Left ventricle myocardium superior (tissue), 1 donor: ENCODE measurements at regions of chr3 and their contacts with region 1.

Region 1: GRCh38 chr3:148718982-148719862 is 21.5 kb downstream of the AGTR1 start:
- DNase-seq: no peak
- ATAC-seq: no peak

Region 2: DNA sequence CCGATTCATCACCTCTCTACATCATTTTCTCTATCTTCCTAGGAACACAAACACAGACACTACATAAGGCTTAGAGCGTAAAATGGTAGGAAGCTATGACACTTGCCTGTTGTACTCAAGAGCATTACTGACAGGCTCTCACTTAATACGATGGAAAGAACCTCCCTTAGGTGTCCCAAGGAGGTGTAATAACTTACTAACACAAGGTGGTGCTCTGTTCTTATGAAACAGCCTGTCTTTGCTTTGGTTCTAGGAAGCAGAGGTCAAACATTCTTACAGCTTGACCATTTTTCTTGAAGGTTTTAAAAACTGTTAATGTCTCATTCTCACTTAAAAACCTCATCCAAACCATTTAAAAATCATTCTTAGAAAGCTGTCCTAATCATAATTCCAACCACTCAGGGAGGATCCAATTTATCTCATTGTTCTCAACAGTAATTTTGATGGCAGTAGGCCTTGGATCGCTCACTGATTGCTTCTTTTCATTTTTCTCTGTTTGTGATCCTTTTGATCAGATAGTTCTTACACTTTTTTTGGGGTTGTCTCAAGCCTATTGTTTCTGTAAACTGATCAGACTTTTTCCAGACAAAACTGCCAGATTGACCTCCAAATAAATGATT is 339.3 kb before region 1 on chr3:
- intact Hi-C with region 1: loop called (anchors 5 kb)
- DNase-seq: no peak
- ATAC-seq: peak; percentile 52

Region 3: GRCh38 chr3:148790851-148791735 is 71.9 kb after region 1 on chr3:
- intact Hi-C with region 1: no loop called
- DNase-seq: no peak
- ATAC-seq: peak; percentile 88